ENCODE measurements at regions of chr4 and their contacts with region 1.

Region 1: GRCh38 chr4:183249857-183250256 is 70.2 kb downstream of the CLDN22 start:
- DNase-seq: no peak
- H3K4me3 ChIP-seq: no peak overlapping the region
- CTCF ChIP-seq: peak; percentile 43

Region 2: DNA sequence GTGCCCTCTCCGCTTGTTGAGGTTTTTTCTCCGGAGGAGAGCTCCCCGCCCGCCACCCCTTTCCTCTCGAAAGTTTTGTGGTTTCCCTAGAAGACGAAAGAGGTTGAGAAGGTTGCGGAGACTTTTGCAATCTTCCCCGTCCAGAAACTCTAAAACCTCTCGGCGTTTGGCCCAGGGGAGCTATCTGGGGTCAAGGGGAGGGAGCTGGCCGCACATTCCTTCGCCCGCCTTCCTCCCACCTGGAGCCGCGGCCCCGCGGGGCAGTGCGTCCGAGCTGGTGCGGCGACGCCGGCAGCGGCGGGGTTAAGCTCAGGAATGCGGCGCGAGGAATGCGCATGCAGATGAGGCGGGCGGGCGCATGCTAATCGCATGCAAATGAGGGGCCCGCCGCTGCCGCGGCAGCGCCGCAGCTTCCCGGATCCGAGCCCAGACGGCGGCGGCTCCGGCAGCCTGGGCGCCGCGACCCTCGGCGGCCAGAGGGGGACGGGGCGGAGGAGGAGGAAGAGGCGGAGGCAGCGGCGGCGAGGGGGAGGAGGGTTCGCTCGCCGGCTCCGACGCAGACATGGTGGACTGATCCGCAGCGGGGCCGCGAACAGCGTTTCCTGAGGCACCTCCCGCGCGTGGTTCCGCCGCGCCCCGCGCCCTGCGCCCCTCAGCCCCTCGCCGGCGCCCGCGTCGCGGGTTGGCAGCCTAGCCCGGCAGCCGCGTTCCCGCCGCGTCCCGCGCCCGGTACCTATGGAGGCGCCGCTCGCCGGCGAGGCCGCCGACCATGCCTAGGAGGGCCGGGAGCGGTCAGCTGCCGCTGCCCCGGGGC is 150.9 kb before region 1 on chr4 and contains the start of gene WWC2:
- CTCF ChIA-PET with region 1: interaction called, 50 read pairs
- POLR2A ChIA-PET with region 1: no interaction called
- DNase-seq: peak; percentile 41
- H3K4me3 ChIP-seq: peak within 1 kb of the TSS; percentile 94
- CTCF ChIP-seq: peak; percentile 7

Region 3: GRCh38 chr4:183229397-183229796 is 20.5 kb before region 1 on chr4:
- CTCF ChIA-PET with region 1: interaction called, 12 read pairs
- POLR2A ChIA-PET with region 1: no interaction called
- DNase-seq: no peak
- H3K4me3 ChIP-seq: no peak overlapping the region
- CTCF ChIP-seq: no peak

Measured in AG04449 (cell line).